Left ventricle myocardium inferior (tissue), 1 donor: ENCODE measurements at regions of chr10 and their contacts with region 1.

Region 1: DNA sequence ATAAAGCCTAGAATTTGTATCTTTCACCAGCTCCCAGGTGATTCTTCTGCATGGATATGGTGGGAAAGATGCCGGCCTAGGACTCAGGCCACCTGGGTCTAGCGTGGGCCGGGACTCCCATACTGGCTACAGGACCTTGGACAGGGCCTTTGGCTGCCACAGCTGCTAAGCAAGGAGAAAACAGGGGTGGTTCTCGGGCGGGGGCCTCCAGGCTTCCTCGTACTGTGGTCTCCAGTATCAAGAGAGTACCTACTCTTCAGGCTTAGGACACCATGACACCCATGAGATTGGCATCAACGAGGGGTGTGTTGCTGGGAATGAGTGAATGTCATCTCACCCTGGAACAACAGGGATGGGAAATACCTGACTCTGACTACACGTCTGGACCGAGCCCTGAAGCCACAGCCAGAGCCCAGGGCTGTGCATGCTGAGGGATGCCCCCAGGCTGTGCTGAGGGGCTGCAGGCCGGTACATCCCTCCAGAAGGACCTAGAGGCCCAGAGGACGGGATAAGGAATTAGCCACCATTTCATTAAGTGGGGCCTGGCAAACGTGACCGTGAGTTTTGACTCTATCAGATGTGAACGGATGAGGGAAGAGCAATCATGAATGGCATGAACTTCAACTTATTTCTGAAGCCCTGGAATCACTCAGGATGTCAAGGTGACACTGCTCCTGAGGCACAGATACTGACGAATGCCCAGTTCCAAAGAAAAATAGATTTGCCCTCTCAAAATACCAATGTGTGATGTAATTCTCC is 120.5 kb upstream of the ADAM12 start:
- DNase-seq: no peak
- H3K4me3 ChIP-seq: no peak overlapping the region
- H3K27ac ChIP-seq: no peak overlapping the region
- H3K4me1 ChIP-seq: no peaks in the 10 kb centered on the region
- H3K27me3 ChIP-seq: peaks cover 58% of the 10 kb centered on the region
- CTCF ChIP-seq: no peak

Region 2: GRCh38 chr10:125982260-125982948 is 526.4 kb before region 1 on chr10:
- intact Hi-C with region 1: loop called (anchors 5 kb)
- DNase-seq: no peak
- H3K4me3 ChIP-seq: no peak overlapping the region
- H3K27ac ChIP-seq: no peak overlapping the region
- H3K4me1 ChIP-seq: no peaks in the 10 kb centered on the region
- H3K27me3 ChIP-seq: peaks cover 17% of the 10 kb centered on the region
- CTCF ChIP-seq: peak; percentile 78

Region 3: DNA sequence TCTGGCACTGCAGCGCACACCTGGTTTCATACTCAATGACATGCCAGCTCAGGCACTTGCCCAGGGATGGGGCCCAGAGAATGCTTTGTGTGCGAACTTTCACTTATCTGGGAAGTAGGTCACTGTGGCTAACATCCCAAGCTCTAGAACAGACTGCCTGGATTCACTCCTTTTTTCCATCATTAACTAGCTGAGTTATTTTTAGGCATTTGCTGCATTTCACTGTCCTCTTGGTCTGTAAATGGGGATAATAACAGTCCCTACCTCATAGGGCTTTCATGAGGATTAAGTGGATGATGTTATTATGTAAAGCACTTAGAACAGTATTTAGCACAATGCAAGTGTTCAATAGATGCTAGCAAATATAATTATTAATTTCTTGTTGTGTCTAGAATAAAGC is 297.7 kb after region 1 on chr10:
- intact Hi-C with region 1: no loop called
- DNase-seq: no peak
- H3K4me3 ChIP-seq: no peak overlapping the region
- H3K27ac ChIP-seq: no peak overlapping the region
- H3K4me1 ChIP-seq: no peaks in the 10 kb centered on the region
- H3K27me3 ChIP-seq: no peaks in the 10 kb centered on the region
- CTCF ChIP-seq: no peak

Region 4: GRCh38 chr10:126921974-126922525 is 413.3 kb after region 1 on chr10:
- intact Hi-C with region 1: no loop called
- DNase-seq: no peak
- H3K4me3 ChIP-seq: no peak overlapping the region
- H3K27ac ChIP-seq: no peak overlapping the region
- H3K4me1 ChIP-seq: peaks cover 41% of the 10 kb centered on the region
- H3K27me3 ChIP-seq: no peaks in the 10 kb centered on the region
- CTCF ChIP-seq: no peak